ENCODE measurements at regions of chr9 and their contacts with region 1.

Region 1: GRCh38 chr9:68887232-68887631 is 126.7 kb downstream of the PRKACG start:
- DNase-seq: no peak
- ATAC-seq: no peak
- H3K4me3 ChIP-seq: no peak overlapping the region
- H3K27ac ChIP-seq: no peak overlapping the region
- H3K4me1 ChIP-seq: no peaks in the 10 kb centered on the region
- H3K27me3 ChIP-seq: no peaks in the 10 kb centered on the region
- CTCF ChIP-seq: no peak

Region 2: GRCh38 chr9:68844631-68845612 is 42.3 kb before region 1 on chr9:
- CTCF ChIA-PET with region 1: no interaction called
- POLR2A ChIA-PET with region 1: no interaction called
- in situ Hi-C with region 1: no loop called
- intact Hi-C with region 1: no loop called
- DNase-seq: peak; percentile 2
- ATAC-seq: no peak
- H3K4me3 ChIP-seq: no peak overlapping the region
- H3K27ac ChIP-seq: no peak overlapping the region
- H3K4me1 ChIP-seq: no peaks in the 10 kb centered on the region
- H3K27me3 ChIP-seq: no peaks in the 10 kb centered on the region
- CTCF ChIP-seq: peak; percentile 49

Region 3: DNA sequence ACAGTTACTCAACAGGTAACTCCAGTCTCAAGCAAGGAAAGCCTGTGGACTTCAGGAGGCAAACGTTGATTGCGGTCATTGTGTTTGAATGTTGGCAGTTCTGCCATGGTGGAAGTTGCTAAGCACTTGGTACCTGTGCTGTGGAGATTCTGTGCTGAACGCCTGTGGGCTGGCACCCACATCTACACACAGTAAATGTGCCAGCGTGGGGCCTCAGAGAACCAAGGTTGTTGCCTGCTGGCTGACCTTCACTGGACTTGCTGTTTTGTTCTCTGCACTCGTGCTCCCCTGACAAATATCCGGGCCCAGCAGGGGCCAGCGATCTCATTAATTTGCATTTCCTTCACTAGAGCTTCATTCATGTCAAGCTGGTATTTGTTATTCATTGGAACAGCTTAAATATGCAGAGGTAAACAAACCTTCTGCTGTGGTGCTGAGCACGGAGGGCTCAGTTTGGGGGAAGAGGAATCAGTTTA is 15.2 kb before region 1 on chr9:
- CTCF ChIA-PET with region 1: no interaction called
- POLR2A ChIA-PET with region 1: no interaction called
- in situ Hi-C with region 1: no loop called
- intact Hi-C with region 1: no loop called
- DNase-seq: no peak
- ATAC-seq: no peak
- H3K4me3 ChIP-seq: no peak overlapping the region
- H3K27ac ChIP-seq: no peak overlapping the region
- H3K4me1 ChIP-seq: no peaks in the 10 kb centered on the region
- H3K27me3 ChIP-seq: no peaks in the 10 kb centered on the region; the same call in 1 of the 2 replicates
- CTCF ChIP-seq: no peak

Region 4: GRCh38 chr9:68933434-68934328 is 46.4 kb after region 1 on chr9:
- CTCF ChIA-PET with region 1: no interaction called
- POLR2A ChIA-PET with region 1: no interaction called
- in situ Hi-C with region 1: no loop called
- intact Hi-C with region 1: loop called (anchors 5 kb)
- DNase-seq: no peak
- ATAC-seq: no peak
- H3K4me3 ChIP-seq: no peak overlapping the region
- H3K27ac ChIP-seq: no peak overlapping the region
- H3K4me1 ChIP-seq: no peaks in the 10 kb centered on the region
- H3K27me3 ChIP-seq: no peaks in the 10 kb centered on the region
- CTCF ChIP-seq: no peak